Stomach (tissue), 19 donors: ENCODE measurements at regions of chr1 and their contacts with region 1.

Region 1: GRCh38 chr1:25997828-25998761 is at the start of gene PAFAH2:
- DNase-seq: peak; percentile 97 to 100
- H3K4me3 ChIP-seq: peak within 1 kb of the TSS; percentile 70 to 78 (median 71)
- H3K27ac ChIP-seq: peak within 1 kb of the TSS; percentile 82 to 95 (median 89)
- H3K4me1 ChIP-seq: peaks cover 10 to 27% (median 22%) of the 10 kb centered on the region in 4 donors
- H3K27me3 ChIP-seq: no peaks in the 10 kb centered on the region
- CTCF ChIP-seq: peak in 6 of 7 experiments; percentile 90 to 100 (median 96)
- EP300 ChIP-seq: no peak
- POLR2A ChIP-seq: no peak
- total RNA-seq, gene PAFAH2: 0.58 to 25.5 (median 14.9) TPM

Region 2: DNA sequence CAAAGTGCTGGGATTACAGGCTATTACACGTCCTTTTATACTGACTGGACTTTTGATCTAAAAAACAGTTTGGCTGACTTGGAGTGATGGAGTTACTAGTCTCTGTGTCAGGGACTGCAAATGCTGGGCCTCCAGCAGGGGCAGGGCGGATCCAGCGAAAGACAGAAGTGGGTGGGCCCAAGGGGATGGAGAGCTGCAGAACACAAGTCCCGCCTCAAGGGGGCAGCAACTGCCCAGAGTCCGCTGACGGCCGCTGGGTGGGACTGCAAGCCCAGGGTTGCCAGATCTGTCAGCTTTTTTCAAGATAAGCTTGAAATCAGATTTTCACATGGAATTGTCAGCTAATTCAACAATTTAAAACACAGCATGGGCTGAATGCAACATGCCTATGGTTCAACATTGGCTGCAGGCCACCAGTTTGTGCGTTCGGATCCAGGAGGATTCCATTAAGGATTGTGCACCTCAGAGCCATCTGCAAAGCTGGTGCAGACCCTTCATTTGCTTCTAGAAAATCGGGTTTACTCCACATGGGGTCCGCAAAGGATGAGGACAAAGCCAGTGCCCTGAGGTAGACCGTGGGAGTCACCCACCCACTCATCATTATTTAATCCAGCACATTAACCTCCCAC is 102.6 kb before region 1 on chr1:
- intact Hi-C with region 1: loop called (anchors 5 kb)
- DNase-seq: peak; percentile 91 to 97
- H3K4me3 ChIP-seq: no peak overlapping the region
- H3K27ac ChIP-seq: peak overlapping the region in 3 of 5 donors; percentile 23 to 44 (median 38)
- H3K4me1 ChIP-seq: peaks cover 29 to 50% (median 43%) of the 10 kb centered on the region in 4 donors
- H3K27me3 ChIP-seq: no peaks in the 10 kb centered on the region
- CTCF ChIP-seq: peak in 6 of 7 experiments; percentile 83 to 99 (median 98)
- EP300 ChIP-seq: no peak
- POLR2A ChIP-seq: no peak